ENCODE measurements at regions of chr6 and their contacts with region 1.

Region 1: GRCh38 chr6:165649166-165650137 is 13.6 kb downstream of the PDE10A start:
- DNase-seq: peak in 1 of 2 donors; percentile 50
- ATAC-seq: peak; percentile 31 to 70 (median 54)
- H3K4me3 ChIP-seq: peak overlapping the region in 1 of 10 donors; percentile 6
- H3K27ac ChIP-seq: peak overlapping the region in 9 of 10 donors; percentile 42 to 79 (median 66)
- H3K4me1 ChIP-seq: peaks cover 12 to 61% (median 33%) of the 10 kb centered on the region in 9 donors
- H3K27me3 ChIP-seq: no peaks in the 10 kb centered on the region
- CTCF ChIP-seq: no peak

Region 2: GRCh38 chr6:165573671-165574070 is 75.8 kb before region 1 on chr6:
- intact Hi-C with region 1: loop called in 2 of 10 experiments (anchors 5 kb)
- DNase-seq: peak; percentile 57 to 85
- ATAC-seq: peak; percentile 88 to 99 (median 96)
- H3K4me3 ChIP-seq: no peak overlapping the region
- H3K27ac ChIP-seq: peak overlapping the region in 8 of 10 donors; percentile 18 to 72 (median 35)
- H3K4me1 ChIP-seq: peaks cover 0 to 51% (median 26%) of the 10 kb centered on the region in 9 donors
- H3K27me3 ChIP-seq: no peaks in the 10 kb centered on the region
- CTCF ChIP-seq: peak in 2 of 9 donors; percentile 17 to 31